Ascending aorta (tissue), 2 donors: ENCODE measurements at regions of chr3 and their contacts with region 1.

Region 1: GRCh38 chr3:43733459-43734384 is 43.0 kb downstream of the ABHD5 start:
- DNase-seq: peak; percentile 19 to 91
- H3K4me3 ChIP-seq: no peak overlapping the region
- H3K27ac ChIP-seq: peak overlapping the region; percentile 72 to 82
- H3K4me1 ChIP-seq: peaks cover 6 to 34% of the 10 kb centered on the region in 2 donors
- H3K27me3 ChIP-seq: no peaks in the 10 kb centered on the region
- CTCF ChIP-seq: no peak

Region 2: DNA sequence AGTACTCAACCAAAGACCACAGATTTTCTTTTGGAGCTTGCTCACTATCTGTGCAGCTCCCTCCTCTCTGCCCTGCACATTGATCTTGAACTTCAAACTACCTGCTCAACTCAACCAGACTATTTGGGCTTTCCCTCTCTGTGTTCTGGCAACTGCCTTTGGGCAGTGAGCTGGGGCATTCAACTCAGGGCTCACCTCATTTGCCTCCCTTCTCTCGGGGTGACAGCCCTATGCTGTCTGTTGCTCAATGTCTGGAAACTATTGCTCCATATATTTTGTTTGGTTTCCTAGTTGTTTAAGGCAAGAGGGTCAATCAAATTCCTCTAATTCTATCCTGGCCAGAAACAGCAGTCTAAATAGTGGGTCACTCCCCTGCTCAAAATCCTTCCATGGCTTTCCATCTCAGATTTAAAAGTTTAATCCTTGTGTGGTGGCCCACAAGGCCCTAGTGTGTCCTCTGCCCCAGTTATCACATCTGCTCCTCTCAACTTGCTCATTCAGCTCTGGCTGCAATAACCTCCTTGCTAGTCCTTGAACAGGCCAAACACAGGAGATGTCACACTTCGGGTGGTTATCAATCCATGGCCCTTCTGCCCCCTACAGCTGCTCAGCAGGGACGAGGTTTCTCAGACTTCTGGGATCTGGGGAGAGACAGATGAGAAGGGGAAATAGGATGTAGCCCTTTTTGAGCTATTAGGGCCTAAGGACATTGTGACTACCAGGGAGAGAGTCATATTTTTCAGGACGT is 379.6 kb before region 1 on chr3:
- intact Hi-C with region 1: no loop called
- DNase-seq: no peak
- H3K4me3 ChIP-seq: no peak overlapping the region
- H3K27ac ChIP-seq: no peak overlapping the region
- H3K4me1 ChIP-seq: no peaks in the 10 kb centered on the region
- H3K27me3 ChIP-seq: no peaks in the 10 kb centered on the region
- CTCF ChIP-seq: no peak

Region 3: GRCh38 chr3:43759297-43759782 is 25.6 kb after region 1 on chr3:
- intact Hi-C with region 1: loop called (anchors 2 kb)
- DNase-seq: peak in 1 of 2 donors; percentile 40
- H3K4me3 ChIP-seq: no peak overlapping the region
- H3K27ac ChIP-seq: peak overlapping the region; percentile 43 to 55
- H3K4me1 ChIP-seq: peaks cover 0 to 7% of the 10 kb centered on the region in 2 donors
- H3K27me3 ChIP-seq: no peaks in the 10 kb centered on the region
- CTCF ChIP-seq: peak in 1 of 3 experiments; percentile 40

Region 4: DNA sequence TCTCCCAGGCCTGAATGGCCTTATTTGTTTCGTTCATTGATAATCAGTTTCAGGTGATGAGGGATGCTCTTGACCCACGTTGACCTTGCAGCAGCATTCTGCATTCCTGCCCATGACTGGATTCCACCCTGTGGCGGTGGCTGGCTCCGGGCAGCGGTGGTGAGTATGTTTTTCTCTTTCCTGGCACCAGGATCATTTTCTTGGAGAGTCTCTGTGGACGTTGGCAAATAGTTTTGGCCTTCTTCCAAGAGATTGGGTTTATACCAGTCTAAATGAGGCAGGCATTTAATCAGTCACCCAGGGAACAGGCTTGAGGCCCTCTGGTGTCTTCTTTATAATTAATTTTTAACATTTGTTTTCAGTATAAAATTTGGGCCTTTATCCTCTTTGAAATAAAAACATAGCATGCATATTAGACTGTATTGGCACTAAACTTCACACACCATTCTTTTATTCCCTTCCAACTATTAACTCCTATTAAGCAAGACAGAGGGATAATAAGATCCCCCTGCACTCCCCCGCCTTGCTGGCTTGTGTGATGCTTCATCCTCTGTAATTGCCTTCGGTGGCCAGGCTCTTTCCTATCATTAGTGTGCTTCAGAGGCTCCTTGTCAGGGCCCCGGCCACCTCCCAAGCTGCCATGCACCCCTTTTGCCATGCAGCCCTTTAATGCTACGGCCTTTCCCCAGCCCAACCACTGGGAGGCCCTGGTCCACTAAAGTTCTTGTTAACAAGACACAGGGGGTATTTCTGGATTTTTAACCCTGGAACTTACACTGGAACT is 331.8 kb after region 1 on chr3:
- intact Hi-C with region 1: loop called (anchors 10 kb)
- DNase-seq: no peak
- H3K4me3 ChIP-seq: no peak overlapping the region
- H3K27ac ChIP-seq: no peak overlapping the region
- H3K4me1 ChIP-seq: peaks cover 0 to 4% of the 10 kb centered on the region in 2 donors
- H3K27me3 ChIP-seq: no peaks in the 10 kb centered on the region
- CTCF ChIP-seq: no peak